ENCODE measurements at regions of chr11 and their contacts with region 1.

Region 1: GRCh38 chr11:123235117-123235655 is 40.1 kb upstream of the CLMP start:
- DNase-seq: peak; percentile 21 to 53
- ATAC-seq: peak in 5 of 8 donors; percentile 34 to 66 (median 56)
- H3K4me3 ChIP-seq: no peak overlapping the region
- H3K27ac ChIP-seq: no peak overlapping the region
- H3K4me1 ChIP-seq: peaks cover 0 to 31% (median 0%) of the 10 kb centered on the region in 9 donors
- H3K27me3 ChIP-seq: peaks cover 0 to 9% (median 0%) of the 10 kb centered on the region in 7 donors
- CTCF ChIP-seq: peak; percentile 6 to 66 (median 51)

Region 2: GRCh38 chr11:123166071-123166559 is 69.1 kb before region 1 on chr11:
- intact Hi-C with region 1: loop called in 2 of 10 experiments (anchors 10 kb)
- DNase-seq: peak; percentile 14 to 32
- ATAC-seq: peak in 6 of 8 donors; percentile 28 to 61 (median 48)
- H3K4me3 ChIP-seq: no peak overlapping the region
- H3K27ac ChIP-seq: no peak overlapping the region
- H3K4me1 ChIP-seq: peaks cover 0 to 7% (median 0%) of the 10 kb centered on the region in 9 donors
- H3K27me3 ChIP-seq: peaks cover 0 to 19% (median 6%) of the 10 kb centered on the region in 7 donors
- CTCF ChIP-seq: peak in 8 of 9 donors; percentile 23 to 61 (median 48)

Region 3: DNA sequence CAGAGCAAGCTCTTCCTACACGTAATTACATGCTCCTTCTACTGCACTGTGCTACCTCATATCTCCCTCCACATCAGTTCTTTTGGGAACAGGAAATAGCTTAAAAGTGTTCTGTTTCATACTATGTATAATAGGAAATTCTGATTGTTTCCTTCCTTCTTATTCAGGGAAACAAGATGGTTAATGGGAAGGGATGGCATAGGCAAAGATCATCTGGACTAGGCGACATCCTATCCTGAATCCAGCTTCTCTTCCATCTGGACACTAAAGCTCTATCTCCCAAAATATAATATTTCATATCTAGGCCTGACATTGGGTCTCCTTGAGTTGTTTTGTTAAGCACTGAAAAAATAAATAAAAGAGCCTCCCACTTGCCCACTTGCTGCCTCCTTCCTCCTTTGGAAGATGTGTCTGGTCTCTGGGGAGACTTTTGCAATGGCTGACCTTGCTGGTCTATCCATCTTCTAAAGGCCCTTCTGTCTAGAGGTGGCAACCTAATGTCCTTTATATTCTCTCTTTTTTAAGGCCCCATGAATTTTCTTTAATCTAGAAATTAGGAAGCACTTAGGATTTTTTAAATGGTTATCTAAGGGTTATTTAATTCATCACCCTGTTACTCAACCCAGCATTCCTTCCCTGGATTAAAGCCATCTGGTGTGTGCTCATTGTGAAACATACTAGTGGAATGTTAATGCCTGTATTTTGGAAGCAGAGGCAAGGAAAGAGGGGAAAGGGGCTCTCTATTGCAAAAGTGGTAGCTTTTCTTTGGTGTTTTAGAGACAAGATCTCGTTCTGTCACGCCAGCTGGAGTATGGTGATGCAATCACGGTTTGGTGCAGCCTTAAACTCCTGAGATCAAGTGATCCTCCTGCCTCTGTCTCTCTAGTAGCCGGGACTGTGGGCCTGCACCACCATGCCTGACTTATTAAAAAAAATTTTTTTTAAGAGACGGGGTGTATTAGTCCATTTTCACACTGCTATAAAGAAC is 60.7 kb before region 1 on chr11:
- intact Hi-C with region 1: loop called in 2 of 10 experiments (anchors 10 kb)
- DNase-seq: no peak
- ATAC-seq: peak in 7 of 8 donors; percentile 51 to 89 (median 75)
- H3K4me3 ChIP-seq: no peak overlapping the region
- H3K27ac ChIP-seq: peak overlapping the region in 4 of 10 donors; percentile 4 to 69 (median 20)
- H3K4me1 ChIP-seq: peaks cover 0 to 27% (median 5%) of the 10 kb centered on the region in 9 donors
- H3K27me3 ChIP-seq: peaks cover 0 to 34% (median 3%) of the 10 kb centered on the region in 7 donors
- CTCF ChIP-seq: no peak

Measured in heart right ventricle (tissue), 16 donors.